PC-3 (cell line): ENCODE measurements at regions of chr17 and their contacts with region 1.

Region 1: DNA sequence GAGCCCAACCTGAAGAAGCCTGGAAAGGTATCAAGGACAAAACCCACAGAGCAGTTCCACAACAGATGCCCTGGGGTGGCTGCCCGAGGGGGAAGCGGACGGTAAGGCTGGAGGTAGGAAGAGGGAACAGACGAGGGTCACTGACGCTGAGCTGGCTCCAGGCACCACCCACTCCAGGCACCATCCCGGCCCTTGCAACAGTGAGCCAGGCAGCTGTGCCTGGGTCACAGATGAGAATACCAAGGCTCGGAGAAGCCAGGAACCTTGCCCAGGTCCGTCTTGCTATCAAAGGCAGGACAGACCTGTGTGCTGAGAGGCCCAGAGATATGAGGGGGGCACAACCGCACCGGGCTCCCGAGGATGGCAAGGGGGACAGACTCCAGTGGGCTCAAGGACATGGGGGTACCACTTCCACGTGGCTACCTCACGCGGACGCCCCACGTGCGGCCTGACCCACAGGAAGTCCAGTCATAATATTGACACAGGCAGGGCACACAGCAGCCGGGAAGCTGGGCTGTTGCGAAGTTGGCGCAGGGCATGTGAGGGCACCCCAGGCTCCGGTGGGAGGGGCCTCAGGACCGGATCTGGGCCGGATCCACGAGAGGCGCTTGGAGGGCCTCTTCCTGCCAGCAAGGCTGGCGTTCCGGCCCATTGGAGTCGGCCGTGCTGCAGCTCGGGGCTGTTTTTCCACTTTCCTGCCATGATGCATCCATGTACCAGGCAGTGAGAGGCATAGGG is 29.9 kb downstream of the PEMT start:
- DNase-seq: peak; percentile 52
- ATAC-seq: peak; percentile 86
- H3K4me3 ChIP-seq: no peak overlapping the region
- H3K27ac ChIP-seq: peak overlapping the region; percentile 42
- H3K4me1 ChIP-seq: peaks cover 5% of the 10 kb centered on the region
- H3K27me3 ChIP-seq: no peaks in the 10 kb centered on the region
- CTCF ChIP-seq: no peak

Region 2: DNA sequence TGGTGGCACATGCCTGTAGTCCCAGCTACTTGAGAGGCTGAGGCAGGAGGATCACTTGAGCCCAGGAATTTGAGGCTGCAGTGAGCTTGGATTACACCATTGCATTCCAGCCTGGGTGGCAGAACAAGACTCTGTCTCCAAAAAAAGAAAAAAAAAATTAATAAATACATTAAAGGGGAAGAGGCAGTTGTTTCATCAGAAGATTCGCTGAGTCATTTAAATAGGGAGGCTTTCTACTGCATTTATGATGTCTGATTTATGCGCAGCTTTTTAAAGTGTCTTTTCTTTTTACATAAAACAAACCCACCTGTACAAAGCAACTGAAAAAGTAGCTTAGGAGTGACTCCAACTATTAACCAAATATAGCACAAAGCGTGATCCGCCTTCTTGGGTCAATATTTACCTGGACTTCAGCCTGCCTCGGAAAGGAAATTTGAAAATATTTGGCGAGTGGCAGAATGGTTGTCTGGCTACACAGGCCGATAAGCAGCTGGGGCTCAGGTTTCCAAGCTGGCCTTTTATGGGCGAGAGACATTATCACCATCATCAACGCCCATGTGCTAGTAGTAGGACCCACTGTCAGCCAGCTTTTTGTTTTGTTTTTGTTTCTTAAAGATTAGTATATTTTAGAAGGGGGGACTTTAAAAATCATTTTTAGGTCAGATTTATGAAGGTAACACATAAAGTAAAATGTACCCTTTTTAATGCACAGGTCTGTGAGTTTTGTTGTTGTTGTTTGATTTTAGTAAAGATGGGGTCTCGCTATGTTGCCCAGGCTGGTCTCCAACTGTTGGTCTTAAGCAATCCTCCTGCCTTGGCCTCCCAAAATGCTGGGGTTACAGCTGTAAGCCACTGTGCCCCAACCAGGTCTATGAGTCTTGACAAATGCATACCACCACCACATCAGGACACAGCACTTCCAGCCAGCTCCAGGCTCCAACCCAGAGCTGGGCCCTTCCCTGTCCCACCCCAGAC is 22.9 kb before region 1 on chr17:
- CTCF ChIA-PET with region 1: no interaction called
- POLR2A ChIA-PET with region 1: no interaction called
- intact Hi-C with region 1: loop called (anchors 1 kb)
- DNase-seq: peak; percentile 96
- ATAC-seq: peak; percentile 91
- H3K4me3 ChIP-seq: no peak overlapping the region
- H3K27ac ChIP-seq: peak overlapping the region; percentile 53
- H3K4me1 ChIP-seq: peaks cover 20% of the 10 kb centered on the region
- H3K27me3 ChIP-seq: no peaks in the 10 kb centered on the region
- CTCF ChIP-seq: no peak